Caco-2 (cell line): ENCODE measurements at regions of chr15 and their contacts with region 1.

Region 1: GRCh38 chr15:95291898-95292472 is 1038.5 kb upstream of the NR2F2 start:
- DNase-seq: peak in 1 of 2 experiments; percentile 32
- H3K4me3 ChIP-seq: no peak overlapping the region
- H3K4me3 Mint-ChIP-seq: no peak overlapping the region
- H3K27ac Mint-ChIP-seq: no peak overlapping the region
- H3K4me1 ChIP-seq: no peaks in the 10 kb centered on the region
- H3K4me1 Mint-ChIP-seq: no peaks in the 10 kb centered on the region
- H3K27me3 ChIP-seq: no peaks in the 10 kb centered on the region
- H3K27me3 Mint-ChIP-seq: peaks cover 6% of the 10 kb centered on the region
- CTCF ChIP-seq: peak; percentile 48

Region 2: GRCh38 chr15:94582369-94582768 is 709.6 kb before region 1 on chr15:
- CTCF ChIA-PET with region 1: no interaction called
- POLR2A ChIA-PET with region 1: no interaction called
- intact Hi-C with region 1: loop called (anchors 1 kb)
- DNase-seq: peak; percentile 38 to 41
- H3K4me3 ChIP-seq: no peak overlapping the region
- H3K4me3 Mint-ChIP-seq: no peak overlapping the region
- H3K27ac Mint-ChIP-seq: no peak overlapping the region
- H3K4me1 ChIP-seq: no peaks in the 10 kb centered on the region
- H3K4me1 Mint-ChIP-seq: no peaks in the 10 kb centered on the region
- H3K27me3 ChIP-seq: no peaks in the 10 kb centered on the region
- H3K27me3 Mint-ChIP-seq: peaks cover 16% of the 10 kb centered on the region
- CTCF ChIP-seq: peak; percentile 35 to 51

Region 3: GRCh38 chr15:95025924-95026728 is 265.9 kb before region 1 on chr15:
- CTCF ChIA-PET with region 1: no interaction called
- POLR2A ChIA-PET with region 1: no interaction called
- intact Hi-C with region 1: loop called (anchors 10 kb)
- DNase-seq: peak; percentile 42 to 48
- H3K4me3 ChIP-seq: no peak overlapping the region
- H3K4me3 Mint-ChIP-seq: no peak overlapping the region
- H3K27ac Mint-ChIP-seq: no peak overlapping the region
- H3K4me1 ChIP-seq: no peaks in the 10 kb centered on the region
- H3K4me1 Mint-ChIP-seq: no peaks in the 10 kb centered on the region
- H3K27me3 ChIP-seq: no peaks in the 10 kb centered on the region
- H3K27me3 Mint-ChIP-seq: peaks cover 5% of the 10 kb centered on the region
- CTCF ChIP-seq: peak in 1 of 2 experiments; percentile 47

Region 4: DNA sequence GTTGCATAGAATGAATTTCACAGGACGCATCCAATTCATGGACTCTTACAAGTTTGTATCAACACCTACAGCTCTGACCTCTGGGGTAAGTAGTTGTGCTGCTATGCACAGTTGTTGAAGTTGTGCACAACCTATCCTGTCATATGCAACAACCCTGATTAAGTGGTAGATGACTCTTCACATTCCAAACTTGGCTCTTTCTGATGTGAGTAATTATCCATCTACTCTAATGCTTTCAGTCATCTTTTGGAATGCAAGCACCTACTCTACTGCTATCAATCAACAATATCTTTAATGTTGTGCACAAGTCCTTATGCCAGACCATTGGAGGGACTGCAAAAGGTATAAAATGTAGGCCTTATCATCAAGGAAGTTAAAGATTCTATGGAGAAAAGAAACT is 139.2 kb before region 1 on chr15:
- CTCF ChIA-PET with region 1: no interaction called
- POLR2A ChIA-PET with region 1: no interaction called
- intact Hi-C with region 1: no loop called
- DNase-seq: no peak
- H3K4me3 ChIP-seq: no peak overlapping the region
- H3K4me3 Mint-ChIP-seq: no peak overlapping the region
- H3K27ac Mint-ChIP-seq: no peak overlapping the region
- H3K4me1 ChIP-seq: no peaks in the 10 kb centered on the region
- H3K4me1 Mint-ChIP-seq: no peaks in the 10 kb centered on the region
- H3K27me3 ChIP-seq: no peaks in the 10 kb centered on the region
- H3K27me3 Mint-ChIP-seq: no peaks in the 10 kb centered on the region
- CTCF ChIP-seq: no peak

Region 5: DNA sequence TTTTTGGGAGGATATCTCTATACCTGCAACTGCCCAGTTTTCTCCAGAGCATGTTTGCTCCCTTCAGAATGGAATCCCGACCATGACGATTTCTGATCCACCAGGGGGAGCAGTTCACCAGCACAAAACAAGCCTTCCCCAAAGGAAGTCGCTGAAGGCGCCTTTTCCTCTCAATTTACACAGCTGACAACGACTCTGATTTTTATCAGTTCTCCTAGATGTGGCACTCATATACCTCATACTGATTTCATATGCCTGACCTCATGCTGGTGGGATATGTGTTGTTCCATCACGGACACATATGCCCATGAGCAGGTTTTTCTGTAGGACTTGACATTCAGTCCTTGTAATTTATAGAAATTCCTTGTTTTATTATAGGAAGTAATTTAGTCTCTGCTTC is 32.5 kb before region 1 on chr15:
- CTCF ChIA-PET with region 1: no interaction called
- POLR2A ChIA-PET with region 1: no interaction called
- intact Hi-C with region 1: loop called (anchors 1 kb)
- DNase-seq: peak; percentile 55 to 65
- H3K4me3 ChIP-seq: no peak overlapping the region
- H3K4me3 Mint-ChIP-seq: no peak overlapping the region
- H3K27ac Mint-ChIP-seq: no peak overlapping the region
- H3K4me1 ChIP-seq: no peaks in the 10 kb centered on the region
- H3K4me1 Mint-ChIP-seq: no peaks in the 10 kb centered on the region
- H3K27me3 ChIP-seq: no peaks in the 10 kb centered on the region
- H3K27me3 Mint-ChIP-seq: no peaks in the 10 kb centered on the region
- CTCF ChIP-seq: peak; percentile 65 to 68